ENCODE measurements at regions of chr5 and their contacts with region 1.

Region 1: DNA sequence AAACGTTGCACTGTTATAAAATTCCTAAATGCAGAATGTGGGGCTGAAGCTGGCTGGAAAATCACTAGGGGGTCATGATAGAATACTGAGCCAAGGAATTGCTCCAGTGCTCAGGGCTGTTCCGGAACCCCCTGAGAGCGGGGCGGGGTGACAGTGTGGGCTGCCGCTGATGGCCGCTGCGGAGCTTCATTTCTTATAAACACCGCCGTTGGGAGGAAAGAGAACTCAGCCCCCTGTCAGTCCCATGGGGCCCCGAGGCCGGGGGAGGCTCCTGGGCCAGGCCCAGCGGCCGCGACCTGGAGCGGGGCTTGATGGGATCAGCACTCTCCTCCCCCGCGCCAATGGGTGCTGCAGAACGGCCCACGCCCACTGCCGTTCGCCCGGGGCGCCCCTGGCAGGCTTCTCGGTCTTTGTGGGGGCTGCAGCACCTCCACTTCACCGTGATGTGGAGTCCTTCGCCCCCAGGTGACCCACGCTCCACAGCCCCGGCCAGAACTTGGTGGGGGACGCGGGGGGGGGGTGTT is 5.2 kb upstream of the IRF1 start:
- DNase-seq: peak; percentile 90 to 95 (median 94)
- ATAC-seq: peak; percentile 84
- H3K4me3 ChIP-seq: peak overlapping the region; percentile 72
- H3K27ac ChIP-seq: peak overlapping the region; percentile 87
- H3K4me1 ChIP-seq: peaks cover 47 to 61% of the 10 kb centered on the region in 2 experiments
- H3K27me3 ChIP-seq: no peaks in the 10 kb centered on the region
- CTCF ChIP-seq: peak; percentile 33 to 40 (median 39); a peak in 5 of 6 replicates
- EP300 ChIP-seq: peak; percentile 60
- POLR2A ChIP-seq: peak; percentile 61
- RAD21 ChIP-seq: peak; percentile 43 to 48

Region 2: DNA sequence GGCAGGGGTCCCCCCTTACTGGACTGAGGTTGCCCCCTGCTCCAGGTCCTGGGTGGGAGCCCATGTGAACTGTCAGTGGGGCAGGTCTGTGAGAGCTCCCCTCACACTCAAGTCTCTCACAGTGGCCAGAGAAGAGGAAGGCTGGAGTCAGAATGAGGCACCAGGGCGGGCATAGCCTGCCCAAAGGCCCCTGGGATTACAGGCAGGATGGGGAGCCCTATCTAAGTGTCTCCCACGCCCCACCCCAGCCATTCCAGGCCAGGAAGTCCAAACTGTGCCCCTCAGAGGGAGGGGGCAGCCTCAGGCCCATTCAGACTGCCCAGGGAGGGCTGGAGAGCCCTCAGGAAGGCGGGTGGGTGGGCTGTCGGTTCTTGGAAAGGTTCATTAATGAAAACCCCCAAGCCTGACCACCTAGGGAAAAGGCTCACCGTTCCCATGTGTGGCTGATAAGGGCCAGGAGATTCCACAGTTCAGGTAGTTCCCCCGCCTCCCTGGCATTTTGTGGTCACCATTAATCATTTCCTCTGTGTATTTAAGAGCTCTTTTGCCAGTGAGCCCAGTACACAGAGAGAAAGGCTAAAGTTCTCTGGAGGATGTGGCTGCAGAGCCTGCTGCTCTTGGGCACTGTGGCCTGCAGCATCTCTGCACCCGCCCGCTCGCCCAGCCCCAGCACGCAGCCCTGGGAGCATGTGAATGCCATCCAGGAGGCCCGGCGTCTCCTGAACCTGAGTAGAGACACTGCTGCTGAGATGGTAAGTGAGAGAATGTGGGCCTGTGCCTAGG is 422.3 kb before region 1 on chr5 and contains the start of gene CSF2:
- CTCF ChIA-PET with region 1: no interaction called
- POLR2A ChIA-PET with region 1: no interaction called
- in situ Hi-C with region 1: loop called (anchors 5 kb)
- intact Hi-C with region 1: loop called (anchors 2 kb)
- DNase-seq: no peak
- ATAC-seq: no peak
- H3K4me3 ChIP-seq: no peak within 1 kb of the TSS
- H3K27ac ChIP-seq: no peak within 1 kb of the TSS
- H3K4me1 ChIP-seq: peaks cover 28 to 58% of the 10 kb centered on the region in 2 experiments
- H3K27me3 ChIP-seq: no peaks in the 10 kb centered on the region
- CTCF ChIP-seq: no peak
- EP300 ChIP-seq: no peak
- POLR2A ChIP-seq: no peak
- RAD21 ChIP-seq: no peak
- polyA plus RNA-seq, gene CSF2: not detected

Region 3: DNA sequence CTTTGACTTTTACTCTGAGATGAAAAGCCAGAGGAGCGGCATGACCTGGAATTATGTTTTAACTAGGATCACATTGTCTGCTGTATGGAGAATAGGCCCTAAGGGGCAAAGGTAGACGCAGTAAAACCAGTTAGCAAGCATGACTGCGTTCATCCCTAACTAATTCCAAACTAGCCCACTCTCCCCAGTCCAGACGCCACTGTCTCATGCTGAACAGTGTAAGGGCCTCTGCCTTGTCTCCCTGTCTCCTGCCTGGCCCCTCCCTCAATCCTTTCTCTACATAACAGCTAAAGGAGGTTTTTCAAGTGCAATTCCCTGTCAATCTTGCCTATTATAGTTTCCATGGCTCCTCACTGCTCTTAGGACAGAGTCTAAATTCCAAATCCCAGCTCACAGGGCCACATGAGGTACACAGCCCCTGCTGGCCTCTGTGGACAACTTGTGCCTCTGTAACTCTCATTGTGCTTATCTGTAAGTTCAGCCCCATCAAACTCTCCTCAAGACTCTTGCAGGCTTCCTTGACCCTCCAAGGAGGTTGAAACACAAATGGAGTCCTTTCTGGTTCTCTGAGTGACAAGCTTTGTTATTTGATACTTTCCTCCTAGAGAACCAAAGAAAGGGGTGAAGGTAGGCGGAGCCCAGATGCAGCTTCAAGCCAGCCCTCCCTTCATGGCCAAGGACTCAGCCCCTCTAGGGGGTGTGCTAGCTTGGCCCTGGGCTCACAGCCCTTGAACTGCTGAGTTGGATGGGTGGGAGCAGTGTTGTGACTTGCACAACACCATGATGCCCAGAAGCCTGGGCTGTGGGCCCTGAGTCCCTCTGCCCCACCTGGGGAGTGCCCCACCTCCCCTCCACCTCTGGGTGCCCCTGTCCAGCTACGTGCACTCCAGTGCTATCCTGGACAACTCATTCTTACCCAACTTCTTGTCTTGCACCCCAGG is 217.5 kb before region 1 on chr5:
- CTCF ChIA-PET with region 1: no interaction called
- POLR2A ChIA-PET with region 1: interaction called, 3 read pairs
- in situ Hi-C with region 1: no loop called
- intact Hi-C with region 1: loop called (anchors 1 kb)
- DNase-seq: peak; percentile 66 to 90 (median 78)
- ATAC-seq: peak; percentile 89
- H3K4me3 ChIP-seq: no peak overlapping the region
- H3K27ac ChIP-seq: peak overlapping the region; percentile 52
- H3K4me1 ChIP-seq: peaks cover 40 to 44% of the 10 kb centered on the region in 2 experiments; a peak in 4 of 5 replicates
- H3K27me3 ChIP-seq: no peaks in the 10 kb centered on the region
- CTCF ChIP-seq: 0 out of 6 replicates have a peak, but pooled peaks have one; percentile 8 to 25 (median 20)
- EP300 ChIP-seq: no peak
- POLR2A ChIP-seq: no peak
- RAD21 ChIP-seq: 0 out of 4 replicates have a peak, but pooled peaks of 1 of the 2 experiments have one; percentile 18

Region 4: DNA sequence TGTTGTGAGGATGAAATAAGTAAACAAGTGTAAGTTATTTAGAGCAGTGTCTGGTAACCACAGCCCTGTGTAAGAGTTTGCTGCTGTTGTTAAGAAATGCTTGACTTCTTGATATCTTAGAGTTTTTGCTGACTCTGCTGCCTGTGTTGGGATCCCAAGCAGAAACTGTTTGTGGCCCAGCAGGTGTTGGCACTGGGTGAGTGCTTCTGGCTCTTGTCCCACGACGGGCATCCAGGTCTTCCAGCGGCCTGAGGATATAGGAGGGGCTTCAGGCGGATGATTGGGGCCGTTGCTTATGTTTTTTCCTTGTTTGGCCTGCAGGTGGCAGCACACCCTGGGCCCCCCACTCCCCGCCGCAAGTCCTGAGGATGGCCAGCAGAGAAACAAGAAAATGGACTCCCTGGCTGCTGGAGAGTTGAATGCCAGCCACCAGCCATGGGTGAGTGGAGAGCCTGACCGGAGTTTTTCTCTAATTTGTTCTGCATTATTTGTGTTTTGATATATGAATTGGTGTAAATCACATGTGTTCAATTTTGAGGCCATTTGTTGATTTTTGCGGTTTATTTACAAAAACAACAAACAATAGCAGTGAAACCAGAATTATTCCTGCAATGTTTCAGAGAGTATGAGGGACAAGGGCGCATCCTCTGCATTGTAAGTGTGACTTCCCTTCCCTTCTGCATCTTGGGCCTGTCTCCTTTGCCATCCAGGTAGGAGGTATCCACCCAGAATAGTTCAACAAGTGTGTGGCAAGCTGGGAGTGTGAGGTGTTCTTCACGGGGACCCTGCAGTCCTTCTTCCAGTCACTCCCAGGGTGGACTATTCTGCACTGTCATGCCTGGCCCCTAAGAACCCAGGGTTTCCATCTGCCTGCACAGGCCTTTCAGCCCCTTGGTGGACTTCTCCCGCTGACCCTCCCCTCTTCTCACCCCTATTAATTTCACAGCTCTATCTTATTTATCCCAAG is 75.9 kb before region 1 on chr5:
- CTCF ChIA-PET with region 1: interaction called, 10 read pairs
- POLR2A ChIA-PET with region 1: interaction called, 64 read pairs
- in situ Hi-C with region 1: no loop called
- intact Hi-C with region 1: loop called (anchors 1 kb)
- DNase-seq: peak; percentile 85 to 89 (median 88)
- ATAC-seq: peak; percentile 81
- H3K4me3 ChIP-seq: no peak overlapping the region
- H3K27ac ChIP-seq: peak overlapping the region; percentile 42; the same call in 2 of the 3 replicates
- H3K4me1 ChIP-seq: peaks cover 22 to 50% of the 10 kb centered on the region in 2 experiments
- H3K27me3 ChIP-seq: no peaks in the 10 kb centered on the region
- CTCF ChIP-seq: peak; percentile 89 to 95 (median 90)
- EP300 ChIP-seq: peak; percentile 8; the same call in 1 of the 2 replicates
- POLR2A ChIP-seq: no peak
- RAD21 ChIP-seq: peak; percentile 94 to 96

Region 5: GRCh38 chr5:132466433-132467286 is 29.1 kb before region 1 on chr5:
- CTCF ChIA-PET with region 1: no interaction called
- POLR2A ChIA-PET with region 1: interaction called, 27 read pairs
- in situ Hi-C with region 1: no loop called
- intact Hi-C with region 1: loop called (anchors 2 kb)
- DNase-seq: peak in 2 of 4 experiments; percentile 50 to 76
- ATAC-seq: peak; percentile 68
- H3K4me3 ChIP-seq: no peak overlapping the region
- H3K27ac ChIP-seq: peak overlapping the region; percentile 54; the same call in 1 of the 3 replicates
- H3K4me1 ChIP-seq: peaks cover 24 to 28% of the 10 kb centered on the region in 2 experiments
- H3K27me3 ChIP-seq: no peaks in the 10 kb centered on the region
- CTCF ChIP-seq: no peak
- EP300 ChIP-seq: 0 out of 2 replicates have a peak, but pooled peaks have one; percentile 22
- POLR2A ChIP-seq: no peak
- RAD21 ChIP-seq: peak in 1 of 2 experiments; percentile 34; a peak in 2 of 4 replicates

Region 6: DNA sequence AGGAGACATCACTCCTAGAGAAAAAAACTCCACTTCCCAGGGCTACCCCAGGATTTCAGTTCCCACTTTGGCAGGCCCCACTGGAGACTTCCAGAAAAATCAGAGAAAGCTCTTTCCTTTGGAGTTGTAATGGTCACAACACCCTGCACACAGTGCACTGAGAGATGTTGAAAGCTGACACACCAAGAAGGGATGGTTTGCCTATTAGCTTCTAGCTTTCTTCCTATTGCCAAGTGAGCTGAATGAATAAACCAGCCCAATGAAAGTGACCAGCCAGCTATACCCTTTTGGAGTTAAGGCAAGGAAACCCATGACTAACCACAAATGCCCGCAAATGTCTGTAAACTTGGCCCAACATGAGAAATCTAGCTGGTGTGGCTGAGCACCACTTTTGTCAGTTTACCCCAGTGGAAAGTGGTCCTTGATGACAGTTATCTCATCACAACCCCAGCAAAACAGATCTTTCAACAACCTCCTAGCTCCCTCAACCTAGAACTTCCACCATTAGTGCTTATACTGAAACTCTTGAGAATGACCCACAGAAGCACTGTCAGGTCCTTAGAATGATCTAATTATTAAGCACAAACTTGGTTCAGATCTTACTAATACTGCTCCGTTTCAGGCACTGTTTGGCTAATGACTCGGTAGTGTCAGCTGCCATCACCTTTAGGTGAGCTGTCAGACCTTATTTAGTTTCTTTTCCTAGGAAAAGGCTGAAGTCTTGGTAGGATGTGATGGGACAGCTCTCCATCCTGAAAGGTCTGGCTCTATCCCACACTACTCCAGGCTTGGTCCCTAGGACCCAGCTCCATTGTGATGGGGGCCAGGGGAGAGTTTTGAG is 16.4 kb before region 1 on chr5:
- CTCF ChIA-PET with region 1: no interaction called
- POLR2A ChIA-PET with region 1: interaction called, 115 read pairs
- in situ Hi-C with region 1: no loop called
- intact Hi-C with region 1: no loop called
- DNase-seq: no peak
- ATAC-seq: no peak
- H3K4me3 ChIP-seq: no peak overlapping the region
- H3K27ac ChIP-seq: no peak overlapping the region
- H3K4me1 ChIP-seq: peaks cover 0 to 13% of the 10 kb centered on the region in 2 experiments; a peak in 3 of 5 replicates
- H3K27me3 ChIP-seq: no peaks in the 10 kb centered on the region
- CTCF ChIP-seq: no peak
- EP300 ChIP-seq: no peak
- POLR2A ChIP-seq: no peak
- RAD21 ChIP-seq: no peak

Region 7: GRCh38 chr5:132714456-132715307 is 219.0 kb after region 1 on chr5:
- CTCF ChIA-PET with region 1: no interaction called
- POLR2A ChIA-PET with region 1: no interaction called
- in situ Hi-C with region 1: no loop called
- intact Hi-C with region 1: no loop called
- DNase-seq: peak in 3 of 4 experiments; percentile 6 to 22 (median 15)
- ATAC-seq: no peak; the same call in 2 of the 3 replicates
- H3K4me3 ChIP-seq: no peak overlapping the region
- H3K27ac ChIP-seq: no peak overlapping the region
- H3K4me1 ChIP-seq: no peaks in the 10 kb centered on the region
- H3K27me3 ChIP-seq: no peaks in the 10 kb centered on the region
- CTCF ChIP-seq: peak; percentile 13 to 55 (median 39); a peak in 4 of 6 replicates
- EP300 ChIP-seq: no peak
- POLR2A ChIP-seq: no peak
- RAD21 ChIP-seq: peak; percentile 37 to 70

Region 8: DNA sequence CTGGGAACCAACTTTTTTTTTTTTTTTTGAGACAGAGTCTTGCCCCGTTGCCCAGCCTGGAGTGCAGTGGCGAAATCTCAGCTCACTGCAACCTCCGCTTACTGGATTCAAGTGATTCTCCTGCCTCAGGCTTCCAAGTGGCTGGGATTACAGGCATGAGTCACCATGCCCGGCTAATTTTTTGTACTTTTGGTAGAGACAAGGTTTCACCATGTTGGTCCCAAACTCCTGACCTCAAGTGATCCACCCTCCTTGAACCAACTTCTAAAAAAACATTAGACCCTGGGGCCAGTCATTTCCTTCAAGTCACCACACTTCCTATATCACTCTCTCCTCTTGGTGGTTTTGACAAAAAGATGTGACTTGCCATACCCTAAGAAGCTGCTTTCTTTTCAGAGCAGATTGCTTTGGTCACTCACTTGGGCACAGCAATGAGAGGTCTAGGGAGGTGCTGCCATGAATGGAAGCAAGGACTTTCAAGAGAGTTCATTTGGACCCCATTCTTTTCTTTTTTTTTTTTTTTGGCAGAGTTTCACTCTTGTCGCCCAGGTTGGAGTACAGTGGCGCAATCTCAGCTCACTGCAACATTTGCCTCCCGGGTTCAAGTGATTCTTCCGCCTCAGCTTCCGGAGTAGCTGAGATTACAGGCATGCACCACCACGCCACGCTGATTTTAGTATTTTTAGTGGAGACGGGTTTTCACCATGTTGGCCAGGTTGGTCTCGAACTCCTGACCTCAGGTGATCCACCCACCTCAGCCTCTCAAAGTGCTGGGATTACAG is 345.8 kb after region 1 on chr5:
- CTCF ChIA-PET with region 1: no interaction called
- POLR2A ChIA-PET with region 1: no interaction called
- in situ Hi-C with region 1: no loop called
- intact Hi-C with region 1: no loop called
- DNase-seq: no peak
- ATAC-seq: no peak
- H3K4me3 ChIP-seq: no peak overlapping the region
- H3K27ac ChIP-seq: no peak overlapping the region
- H3K4me1 ChIP-seq: peaks cover 0 to 19% of the 10 kb centered on the region in 2 experiments; a peak in 3 of 5 replicates
- H3K27me3 ChIP-seq: no peaks in the 10 kb centered on the region
- CTCF ChIP-seq: no peak
- EP300 ChIP-seq: no peak
- POLR2A ChIP-seq: no peak
- RAD21 ChIP-seq: no peak

Measured in K562 (cell line).